ENCODE measurements at regions of chr1 and their contacts with region 1.

Region 1: DNA sequence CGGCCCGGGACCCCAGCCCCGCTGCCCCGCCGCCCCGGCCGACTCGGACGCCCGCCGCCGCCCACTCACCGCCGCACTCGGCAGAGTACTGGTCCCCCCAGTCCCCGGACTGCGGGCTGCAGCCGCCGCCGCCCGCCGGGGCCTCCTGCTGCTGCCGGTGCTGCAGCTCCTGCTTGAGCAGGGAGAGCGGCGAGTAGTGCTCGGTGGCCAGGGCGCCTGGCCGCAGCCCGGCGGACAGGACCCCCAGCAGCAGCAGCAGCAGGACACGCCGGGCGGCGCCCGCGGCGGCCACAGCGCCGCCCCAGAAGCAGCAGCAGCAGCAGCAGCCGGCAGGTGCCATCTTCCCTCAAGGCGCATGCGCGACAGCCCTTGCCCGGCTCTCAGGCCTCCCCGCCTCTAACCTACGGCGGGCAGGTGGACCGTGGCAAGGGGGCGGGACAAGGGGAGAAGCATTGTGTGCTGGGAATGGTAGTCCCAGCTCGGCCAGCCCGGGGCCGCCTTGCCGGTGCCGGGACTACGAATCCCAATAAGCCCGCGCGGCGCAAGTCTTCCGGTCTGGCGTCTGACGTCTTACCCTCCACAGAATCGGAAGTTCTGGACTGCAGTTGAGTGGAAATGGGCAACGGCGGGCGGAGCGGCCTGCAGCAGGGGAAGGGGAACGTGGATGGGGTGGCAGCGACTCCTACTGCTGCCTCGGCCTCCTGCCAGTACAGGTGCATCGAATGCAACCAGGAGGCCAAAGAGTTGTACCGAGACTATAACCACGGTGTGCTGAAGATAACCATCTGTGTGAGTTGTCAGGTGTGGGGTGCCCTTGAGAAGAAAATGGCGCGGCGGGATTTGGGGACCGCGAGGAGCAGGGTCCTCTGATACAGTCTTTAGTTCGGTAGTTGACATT is at the starts of genes ARV1 and TTC13:
- DNase-seq: peak; percentile 96
- ATAC-seq: peak; percentile 96
- H3K4me3 ChIP-seq: peak within 1 kb of the TSS; percentile 84
- H3K27ac ChIP-seq: peak within 1 kb of the TSS; percentile 71
- H3K4me1 ChIP-seq: peaks cover 13% of the 10 kb centered on the region; the same call in 1 of the 2 replicates
- H3K27me3 ChIP-seq: no peaks in the 10 kb centered on the region
- CTCF ChIP-seq: peak; percentile 56 to 80 (median 64); a peak in 4 of 6 replicates
- EP300 ChIP-seq: no peak
- POLR2A ChIP-seq: peak; percentile 97
- RAD21 ChIP-seq: peak; percentile 49; the same call in 1 of the 2 replicates
- polyA plus RNA-seq, gene ARV1: 23.7 to 24.0 TPM
- polyA plus RNA-seq, gene TTC13: 5.8 to 7.1 TPM

Region 2: GRCh38 chr1:229792012-229792895 is 1186.5 kb before region 1 on chr1:
- CTCF ChIA-PET with region 1: no interaction called
- POLR2A ChIA-PET with region 1: no interaction called
- RAD21 ChIA-PET with region 1: no interaction called
- SMC1A ChIA-PET with region 1: no interaction called
- in situ Hi-C with region 1: no loop called
- intact Hi-C with region 1: no loop called
- DNase-seq: no peak
- ATAC-seq: no peak
- H3K4me3 ChIP-seq: no peak overlapping the region
- H3K27ac ChIP-seq: no peak overlapping the region
- H3K4me1 ChIP-seq: no peaks in the 10 kb centered on the region
- H3K27me3 ChIP-seq: 0 out of 4 replicates have a peak, but pooled peaks cover 0 to 2% of the 10 kb centered on the region in 2 experiments
- CTCF ChIP-seq: no peak
- EP300 ChIP-seq: no peak
- POLR2A ChIP-seq: no peak
- RAD21 ChIP-seq: no peak

Region 3: GRCh38 chr1:230642263-230642959 is 336.3 kb before region 1 on chr1 and contains the start of gene COG2:
- CTCF ChIA-PET with region 1: interaction called, 6 read pairs
- POLR2A ChIA-PET with region 1: no interaction called
- RAD21 ChIA-PET with region 1: interaction called, 3 read pairs
- SMC1A ChIA-PET with region 1: no interaction called
- in situ Hi-C with region 1: no loop called
- intact Hi-C with region 1: loop called (anchors 5 kb)
- DNase-seq: peak; percentile 63
- ATAC-seq: peak; percentile 98
- H3K4me3 ChIP-seq: peak within 1 kb of the TSS; percentile 58
- H3K27ac ChIP-seq: peak within 1 kb of the TSS; percentile 76
- H3K4me1 ChIP-seq: peaks cover 16% of the 10 kb centered on the region; the same call in 1 of the 2 replicates
- H3K27me3 ChIP-seq: peaks cover 0 to 2% of the 10 kb centered on the region in 2 experiments; a peak in 2 of 4 replicates
- CTCF ChIP-seq: peak; percentile 99; a peak in 5 of 6 replicates
- EP300 ChIP-seq: no peak
- POLR2A ChIP-seq: peak; percentile 97
- RAD21 ChIP-seq: peak; percentile 42
- polyA plus RNA-seq, gene COG2: 15.0 to 16.7 TPM

Region 4: DNA sequence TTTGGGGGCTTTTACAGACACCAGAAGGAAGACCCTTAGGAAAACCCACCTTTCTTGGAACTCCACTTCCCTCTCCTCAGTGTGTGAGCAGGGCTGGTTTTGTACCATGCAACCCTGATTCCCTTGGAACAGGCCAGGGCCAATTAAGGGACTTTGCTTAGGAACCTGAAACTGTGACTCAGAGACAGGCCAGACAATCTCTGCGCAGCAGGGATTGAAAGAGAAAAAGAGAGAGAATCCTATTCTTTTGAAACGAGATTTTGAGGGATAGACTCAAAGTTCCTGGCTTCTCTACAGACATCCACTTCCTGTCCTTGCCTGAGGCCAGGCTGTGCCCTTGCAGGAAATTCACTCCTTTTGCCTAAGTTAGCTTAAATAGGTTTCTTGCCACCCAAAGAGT is 87.3 kb before region 1 on chr1:
- CTCF ChIA-PET with region 1: no interaction called
- POLR2A ChIA-PET with region 1: no interaction called
- RAD21 ChIA-PET with region 1: no interaction called
- SMC1A ChIA-PET with region 1: no interaction called
- in situ Hi-C with region 1: no loop called
- intact Hi-C with region 1: no loop called
- DNase-seq: no peak
- ATAC-seq: peak; percentile 23; the same call in 2 of the 3 replicates
- H3K4me3 ChIP-seq: no peak overlapping the region
- H3K27ac ChIP-seq: no peak overlapping the region
- H3K4me1 ChIP-seq: no peaks in the 10 kb centered on the region
- H3K27me3 ChIP-seq: no peaks in the 10 kb centered on the region
- CTCF ChIP-seq: no peak
- EP300 ChIP-seq: no peak
- POLR2A ChIP-seq: no peak
- RAD21 ChIP-seq: no peak

Region 5: DNA sequence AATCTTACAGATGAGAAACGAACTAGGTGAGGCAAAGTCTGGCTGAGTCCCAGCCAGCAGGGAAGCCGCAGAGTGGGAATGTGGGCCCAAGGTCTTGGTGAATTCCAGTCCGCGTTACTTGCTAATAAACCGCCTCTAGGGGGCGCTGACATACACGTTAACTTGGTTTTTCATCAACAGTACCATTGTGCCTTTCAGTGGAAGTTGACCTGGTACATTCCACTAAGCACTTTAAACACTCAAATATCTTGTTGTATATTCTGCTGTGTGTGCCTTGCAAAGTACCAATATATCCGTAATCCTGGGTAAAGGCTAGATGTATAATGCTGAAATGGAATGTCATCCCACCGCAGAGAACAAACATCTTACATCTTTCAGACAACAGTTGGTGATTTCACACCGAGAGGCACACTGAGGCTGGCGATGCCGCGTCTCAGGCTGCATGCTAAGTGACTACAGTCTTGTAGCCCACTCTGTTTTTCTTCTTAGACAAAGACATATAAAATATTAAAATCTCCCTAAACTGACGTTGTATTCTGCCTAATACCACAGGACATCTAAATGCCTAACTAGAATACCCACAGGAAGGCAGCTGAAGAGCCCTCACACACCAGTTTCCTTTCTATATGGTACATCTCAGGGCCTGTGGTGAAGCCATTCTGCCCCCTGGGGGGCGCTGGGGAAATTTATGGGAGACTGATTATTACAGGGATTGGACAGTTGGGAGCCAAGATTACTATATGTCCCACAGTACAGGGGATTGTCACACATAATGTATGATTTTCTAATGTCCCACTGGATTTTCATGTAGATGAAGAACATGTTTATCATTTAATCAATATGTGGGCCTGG is 61.2 kb before region 1 on chr1:
- CTCF ChIA-PET with region 1: interaction called, 8 read pairs
- POLR2A ChIA-PET with region 1: no interaction called
- RAD21 ChIA-PET with region 1: interaction called, 6 read pairs
- SMC1A ChIA-PET with region 1: interaction called, 13 read pairs
- in situ Hi-C with region 1: no loop called
- intact Hi-C with region 1: loop called (anchors 2 kb)
- DNase-seq: peak; percentile 17
- ATAC-seq: peak; percentile 95
- H3K4me3 ChIP-seq: no peak overlapping the region
- H3K27ac ChIP-seq: no peak overlapping the region
- H3K4me1 ChIP-seq: no peaks in the 10 kb centered on the region
- H3K27me3 ChIP-seq: no peaks in the 10 kb centered on the region
- CTCF ChIP-seq: peak; percentile 66 to 80 (median 78)
- EP300 ChIP-seq: no peak
- POLR2A ChIP-seq: no peak
- RAD21 ChIP-seq: peak; percentile 79

Region 6: DNA sequence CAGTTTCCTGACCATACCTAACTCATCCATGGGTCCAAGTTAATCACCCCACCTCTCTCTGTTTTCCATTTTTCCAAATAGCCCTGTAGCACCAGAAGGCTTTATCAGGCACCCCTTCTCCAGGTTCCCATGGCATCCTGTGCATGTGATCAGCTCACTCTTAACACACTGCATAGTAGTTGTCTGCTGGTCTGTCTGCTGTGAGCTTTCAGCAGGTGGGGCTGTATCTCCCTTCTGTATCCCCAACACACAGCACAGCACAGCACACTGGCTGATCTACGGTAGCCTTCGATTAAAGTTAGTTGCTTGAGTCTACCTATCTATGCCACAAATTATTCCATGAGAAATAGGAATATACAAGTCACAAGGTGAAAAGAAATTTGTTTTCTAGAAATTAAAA is 56.1 kb before region 1 on chr1:
- CTCF ChIA-PET with region 1: interaction called, 8 read pairs
- POLR2A ChIA-PET with region 1: no interaction called
- RAD21 ChIA-PET with region 1: interaction called, 6 read pairs
- SMC1A ChIA-PET with region 1: interaction called, 13 read pairs
- in situ Hi-C with region 1: no loop called
- intact Hi-C with region 1: loop called (anchors 2 kb)
- DNase-seq: no peak
- ATAC-seq: no peak
- H3K4me3 ChIP-seq: no peak overlapping the region
- H3K27ac ChIP-seq: no peak overlapping the region
- H3K4me1 ChIP-seq: no peaks in the 10 kb centered on the region
- H3K27me3 ChIP-seq: no peaks in the 10 kb centered on the region
- CTCF ChIP-seq: peak in 1 of 3 experiments; percentile 18; a peak in 2 of 6 replicates
- EP300 ChIP-seq: no peak
- POLR2A ChIP-seq: no peak
- RAD21 ChIP-seq: no peak

Region 7: DNA sequence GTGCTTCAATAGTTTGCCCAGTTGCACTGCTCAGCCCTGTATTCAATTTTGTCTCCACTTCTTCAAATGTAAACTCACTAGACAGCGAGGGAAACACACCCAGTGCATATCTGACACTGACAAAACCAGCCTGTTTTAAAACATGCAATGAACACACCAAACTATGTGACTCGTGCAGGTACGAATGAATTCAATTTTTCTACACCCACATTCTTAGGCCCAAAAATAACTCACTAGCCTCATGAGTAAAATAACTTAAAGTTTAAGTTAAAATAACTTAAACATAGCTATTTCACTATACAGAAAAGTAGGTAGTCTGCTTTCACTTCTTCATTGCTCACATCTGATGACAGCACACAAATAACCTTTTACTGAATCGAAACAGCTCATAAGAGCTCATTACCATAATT is 21.2 kb before region 1 on chr1:
- CTCF ChIA-PET with region 1: interaction called, 6 read pairs
- POLR2A ChIA-PET with region 1: interaction called, 6 read pairs
- RAD21 ChIA-PET with region 1: interaction called, 24 read pairs
- SMC1A ChIA-PET with region 1: interaction called, 69 read pairs
- in situ Hi-C with region 1: no loop called
- intact Hi-C with region 1: no loop called
- DNase-seq: no peak
- ATAC-seq: peak; percentile 84
- H3K4me3 ChIP-seq: no peak overlapping the region
- H3K27ac ChIP-seq: peak overlapping the region; percentile 56
- H3K4me1 ChIP-seq: peaks cover 8% of the 10 kb centered on the region
- H3K27me3 ChIP-seq: no peaks in the 10 kb centered on the region
- CTCF ChIP-seq: no peak
- EP300 ChIP-seq: no peak
- POLR2A ChIP-seq: no peak
- RAD21 ChIP-seq: no peak